ENCODE measurements at regions of chr15 and their contacts with region 1.

Region 1: GRCh38 chr15:81265944-81266775 is 57.8 kb downstream of the STARD5 start:
- DNase-seq: peak; percentile 70 to 93
- H3K4me3 ChIP-seq: peak overlapping the region in 3 of 4 experiments; percentile 7 to 51 (median 16); a peak in 3 of 8 replicates
- H3K27ac ChIP-seq: no peak overlapping the region
- H3K4me1 ChIP-seq: peaks cover 0 to 5% (median 1%) of the 10 kb centered on the region in 4 experiments; a peak in 2 of 7 replicates
- H3K27me3 ChIP-seq: peaks cover 0 to 2% (median 0%) of the 10 kb centered on the region in 4 experiments; a peak in 2 of 7 replicates
- CTCF ChIP-seq: peak; percentile 92 to 98 (median 94)
- EP300 ChIP-seq: no peak
- POLR2A ChIP-seq: no peak
- RAD21 ChIP-seq: peak; percentile 94 to 95

Region 2: DNA sequence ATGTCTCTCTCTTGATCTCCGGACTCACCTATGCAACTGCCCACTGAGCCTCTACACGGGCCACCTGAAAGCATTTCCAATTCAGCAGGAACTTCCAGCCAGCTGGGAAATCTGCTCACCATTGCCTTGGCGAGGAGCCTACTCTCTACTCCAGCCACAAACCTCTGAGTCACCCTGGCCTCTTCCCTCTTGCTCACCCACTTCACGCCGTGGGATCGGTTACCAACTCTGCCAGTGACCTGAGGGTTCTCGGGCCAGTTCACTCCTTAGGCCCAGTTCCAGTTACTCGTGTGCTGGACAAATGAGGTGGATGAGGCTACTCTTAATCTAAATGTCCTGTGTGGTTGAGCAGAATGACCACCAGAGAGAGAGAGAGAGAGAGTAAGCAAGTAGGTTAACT is 416.9 kb before region 1 on chr15:
- CTCF ChIA-PET with region 1: no interaction called
- POLR2A ChIA-PET with region 1: no interaction called
- DNase-seq: no peak
- H3K4me3 ChIP-seq: no peak overlapping the region
- H3K27ac ChIP-seq: no peak overlapping the region
- H3K4me1 ChIP-seq: no peaks in the 10 kb centered on the region; a peak in 1 of 7 replicates
- H3K27me3 ChIP-seq: peaks cover 0 to 2% (median 0%) of the 10 kb centered on the region in 4 experiments; a peak in 1 of 7 replicates
- CTCF ChIP-seq: no peak
- EP300 ChIP-seq: no peak
- POLR2A ChIP-seq: no peak
- RAD21 ChIP-seq: no peak

Region 3: DNA sequence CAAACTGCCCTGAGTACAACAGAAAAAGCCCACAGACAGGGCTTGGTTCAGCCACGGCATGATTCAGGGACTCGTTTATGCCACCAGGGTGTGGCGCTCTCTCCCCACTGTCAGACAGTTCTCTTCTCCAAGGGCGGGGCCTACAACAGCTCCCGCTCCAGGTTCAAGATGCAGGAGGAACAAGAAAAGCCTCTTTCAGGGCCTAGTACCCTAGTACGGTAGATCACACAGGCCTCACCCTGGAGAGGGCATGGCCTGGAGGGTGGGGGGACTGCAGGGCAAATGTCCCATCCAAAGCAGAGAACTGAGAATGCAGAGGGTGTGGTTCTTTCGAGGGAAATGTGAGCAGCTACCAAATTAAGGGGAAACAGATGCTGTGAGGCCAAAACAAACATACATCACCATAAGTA is 288.5 kb before region 1 on chr15:
- CTCF ChIA-PET with region 1: interaction called, 22 read pairs
- POLR2A ChIA-PET with region 1: interaction called, 4 read pairs
- DNase-seq: peak in 1 of 2 experiments; percentile 79
- H3K4me3 ChIP-seq: no peak overlapping the region
- H3K27ac ChIP-seq: no peak overlapping the region
- H3K4me1 ChIP-seq: peaks cover 0 to 9% (median 3%) of the 10 kb centered on the region in 4 experiments; a peak in 3 of 7 replicates
- H3K27me3 ChIP-seq: no peaks in the 10 kb centered on the region
- CTCF ChIP-seq: peak; percentile 82 to 84 (median 83)
- EP300 ChIP-seq: no peak
- POLR2A ChIP-seq: no peak
- RAD21 ChIP-seq: peak; percentile 81 to 88

Region 4: DNA sequence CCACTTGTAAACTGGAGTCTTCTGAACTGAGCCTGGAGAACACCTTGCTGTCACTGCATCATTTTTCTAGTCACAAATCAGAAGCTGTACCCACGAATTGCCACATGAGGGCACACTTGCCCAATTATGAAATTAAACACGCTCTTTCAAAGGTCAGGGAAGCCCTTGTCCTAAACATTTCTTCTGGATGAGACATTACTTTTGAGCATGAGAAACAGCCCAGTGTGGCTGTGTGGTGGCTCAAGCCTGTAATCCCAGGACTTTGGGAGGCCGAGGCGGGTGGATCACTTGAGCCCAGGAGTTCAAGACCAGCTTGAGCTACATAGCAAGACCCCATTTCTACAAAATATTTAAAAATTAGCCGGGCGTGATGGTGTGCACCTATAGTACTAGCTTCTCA is 159.6 kb before region 1 on chr15:
- CTCF ChIA-PET with region 1: interaction called, 262 read pairs
- POLR2A ChIA-PET with region 1: interaction called, 3 read pairs
- DNase-seq: peak; percentile 9 to 56
- H3K4me3 ChIP-seq: no peak overlapping the region
- H3K27ac ChIP-seq: no peak overlapping the region
- H3K4me1 ChIP-seq: no peaks in the 10 kb centered on the region
- H3K27me3 ChIP-seq: no peaks in the 10 kb centered on the region
- CTCF ChIP-seq: peak in 2 of 3 experiments; percentile 70 to 79; a peak in 3 of 4 replicates
- EP300 ChIP-seq: no peak
- POLR2A ChIP-seq: no peak
- RAD21 ChIP-seq: peak; percentile 83 to 85

Region 5: GRCh38 chr15:81176291-81176893 is 89.8 kb before region 1 on chr15:
- CTCF ChIA-PET with region 1: interaction called, 35 read pairs
- POLR2A ChIA-PET with region 1: no interaction called
- DNase-seq: no peak
- H3K4me3 ChIP-seq: no peak overlapping the region
- H3K27ac ChIP-seq: no peak overlapping the region
- H3K4me1 ChIP-seq: peaks cover 0 to 7% (median 0%) of the 10 kb centered on the region in 4 experiments; a peak in 1 of 7 replicates
- H3K27me3 ChIP-seq: no peaks in the 10 kb centered on the region
- CTCF ChIP-seq: peak in 1 of 3 experiments; percentile 25; a peak in 1 of 4 replicates
- EP300 ChIP-seq: no peak
- POLR2A ChIP-seq: no peak
- RAD21 ChIP-seq: peak in 1 of 2 experiments; percentile 10; a peak in 1 of 4 replicates

Region 6: DNA sequence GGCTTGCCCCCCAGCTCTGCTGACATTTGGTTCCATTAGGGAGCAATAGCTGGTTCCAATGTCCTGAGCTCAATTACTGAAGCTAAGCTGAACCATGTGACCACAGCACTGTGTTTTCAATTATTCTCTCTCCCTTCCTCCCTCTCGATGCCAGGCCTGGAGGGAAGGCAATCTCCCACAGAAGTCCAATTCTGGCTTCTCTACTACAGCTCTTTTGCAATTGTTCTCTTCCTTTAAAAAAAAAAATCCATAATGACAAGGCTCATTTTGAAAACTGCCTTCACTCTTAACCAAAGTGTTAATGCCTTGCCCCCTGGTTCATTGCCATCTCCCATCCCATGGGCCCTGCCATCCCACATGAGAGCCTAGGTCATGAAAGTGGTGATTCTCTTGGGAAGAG is 44.7 kb before region 1 on chr15:
- CTCF ChIA-PET with region 1: interaction called, 41 read pairs
- POLR2A ChIA-PET with region 1: no interaction called
- DNase-seq: no peak
- H3K4me3 ChIP-seq: no peak overlapping the region
- H3K27ac ChIP-seq: no peak overlapping the region
- H3K4me1 ChIP-seq: peaks cover 0 to 2% (median 0%) of the 10 kb centered on the region in 4 experiments; a peak in 1 of 7 replicates
- H3K27me3 ChIP-seq: no peaks in the 10 kb centered on the region
- CTCF ChIP-seq: no peak
- EP300 ChIP-seq: no peak
- POLR2A ChIP-seq: no peak
- RAD21 ChIP-seq: no peak

Region 7: GRCh38 chr15:81342561-81342960 is 76.4 kb after region 1 on chr15:
- CTCF ChIA-PET with region 1: interaction called, 14 read pairs
- POLR2A ChIA-PET with region 1: no interaction called
- DNase-seq: peak in 1 of 2 experiments; percentile 14
- H3K4me3 ChIP-seq: no peak overlapping the region
- H3K27ac ChIP-seq: no peak overlapping the region
- H3K4me1 ChIP-seq: no peaks in the 10 kb centered on the region
- H3K27me3 ChIP-seq: no peaks in the 10 kb centered on the region
- CTCF ChIP-seq: no peak
- EP300 ChIP-seq: no peak
- POLR2A ChIP-seq: no peak
- RAD21 ChIP-seq: no peak

Region 8: DNA sequence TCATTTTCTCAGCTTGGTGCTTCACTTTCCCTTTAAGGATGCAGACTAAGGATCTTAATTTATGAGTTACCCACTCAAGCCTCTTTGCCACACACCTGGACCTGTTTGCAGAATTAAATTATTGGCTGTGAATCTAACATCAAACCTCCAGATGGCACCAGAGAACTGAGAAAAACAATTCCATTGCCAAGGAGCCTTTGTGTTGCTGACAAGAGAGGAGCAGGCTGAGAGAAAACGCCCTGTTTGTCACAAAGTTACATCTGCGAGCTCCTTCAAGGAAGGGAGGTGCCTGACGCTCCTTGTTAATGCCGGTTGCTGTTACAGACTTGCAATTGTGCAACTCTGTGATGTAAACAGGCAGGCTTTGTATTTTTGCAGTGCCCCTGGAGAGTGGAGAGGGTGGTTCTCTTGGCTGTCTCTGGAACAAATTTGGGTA is 144.2 kb after region 1 on chr15:
- CTCF ChIA-PET with region 1: interaction called, 19 read pairs
- POLR2A ChIA-PET with region 1: no interaction called
- DNase-seq: peak; percentile 60 to 62
- H3K4me3 ChIP-seq: no peak overlapping the region
- H3K27ac ChIP-seq: no peak overlapping the region
- H3K4me1 ChIP-seq: peaks cover 0 to 3% (median 0%) of the 10 kb centered on the region in 4 experiments; a peak in 1 of 7 replicates
- H3K27me3 ChIP-seq: no peaks in the 10 kb centered on the region
- CTCF ChIP-seq: peak in 2 of 3 experiments; percentile 61 to 73; a peak in 3 of 4 replicates
- EP300 ChIP-seq: no peak
- POLR2A ChIP-seq: no peak
- RAD21 ChIP-seq: peak; percentile 87 to 94